GM10248 (cell line): ENCODE measurements at regions of chr3 and their contacts with region 1.

Region 1: GRCh38 chr3:56988458-56989168 is 71.9 kb upstream of the SPATA12 start:
- DNase-seq: peak; percentile 66
- CTCF ChIP-seq: peak; percentile 62

Region 2: GRCh38 chr3:56693750-56694149 is 294.9 kb before region 1 on chr3:
- CTCF ChIA-PET with region 1: interaction called, 16 read pairs
- POLR2A ChIA-PET with region 1: interaction called, 3 read pairs
- DNase-seq: no peak
- CTCF ChIP-seq: no peak

Region 3: GRCh38 chr3:56769116-56769707 is 219.4 kb before region 1 on chr3:
- CTCF ChIA-PET with region 1: interaction called, 11 read pairs
- POLR2A ChIA-PET with region 1: no interaction called
- DNase-seq: no peak
- CTCF ChIP-seq: no peak

Region 4: DNA sequence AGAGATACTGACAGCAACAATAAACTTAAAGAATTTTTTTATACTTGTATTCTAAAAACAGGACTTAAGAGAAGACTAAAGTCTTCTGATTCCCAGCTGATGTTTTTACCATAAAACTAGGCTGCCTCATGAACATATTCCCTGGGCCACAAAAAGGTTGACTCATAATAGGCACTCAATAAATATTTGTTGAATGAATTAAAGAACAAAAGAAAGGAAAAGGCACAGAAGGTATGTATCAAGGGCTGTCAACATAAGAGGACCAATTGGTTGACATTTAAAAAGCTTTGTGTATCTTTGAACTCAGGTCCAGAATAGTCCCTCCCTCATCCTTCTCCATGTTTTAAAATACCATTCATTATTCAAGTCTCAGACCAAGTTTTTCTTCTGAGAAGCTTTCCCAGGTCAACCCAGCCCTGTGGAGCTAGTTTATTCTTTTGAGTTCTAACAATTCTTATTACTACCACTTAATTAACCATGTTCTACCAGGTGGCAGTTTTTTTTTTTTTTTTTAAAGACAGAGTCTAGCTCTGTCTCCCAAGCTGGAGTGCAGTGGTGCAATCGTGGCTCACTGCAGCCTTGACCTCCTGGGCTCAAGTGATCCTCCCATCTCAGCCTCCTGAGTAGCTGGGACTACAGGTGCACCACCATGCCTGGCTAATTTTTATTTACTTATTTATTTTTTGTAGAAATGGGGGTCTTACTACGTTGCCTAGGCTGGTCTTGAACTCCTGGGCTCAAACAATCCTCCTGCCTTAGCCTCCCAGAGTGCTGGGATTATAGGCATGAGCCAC is 169.4 kb before region 1 on chr3:
- CTCF ChIA-PET with region 1: interaction called, 31 read pairs
- POLR2A ChIA-PET with region 1: no interaction called
- DNase-seq: no peak
- CTCF ChIP-seq: no peak

Region 5: GRCh38 chr3:56855856-56856512 is 132.6 kb before region 1 on chr3:
- CTCF ChIA-PET with region 1: interaction called, 12 read pairs
- POLR2A ChIA-PET with region 1: no interaction called
- DNase-seq: peak; percentile 37
- CTCF ChIP-seq: peak; percentile 79

Region 6: DNA sequence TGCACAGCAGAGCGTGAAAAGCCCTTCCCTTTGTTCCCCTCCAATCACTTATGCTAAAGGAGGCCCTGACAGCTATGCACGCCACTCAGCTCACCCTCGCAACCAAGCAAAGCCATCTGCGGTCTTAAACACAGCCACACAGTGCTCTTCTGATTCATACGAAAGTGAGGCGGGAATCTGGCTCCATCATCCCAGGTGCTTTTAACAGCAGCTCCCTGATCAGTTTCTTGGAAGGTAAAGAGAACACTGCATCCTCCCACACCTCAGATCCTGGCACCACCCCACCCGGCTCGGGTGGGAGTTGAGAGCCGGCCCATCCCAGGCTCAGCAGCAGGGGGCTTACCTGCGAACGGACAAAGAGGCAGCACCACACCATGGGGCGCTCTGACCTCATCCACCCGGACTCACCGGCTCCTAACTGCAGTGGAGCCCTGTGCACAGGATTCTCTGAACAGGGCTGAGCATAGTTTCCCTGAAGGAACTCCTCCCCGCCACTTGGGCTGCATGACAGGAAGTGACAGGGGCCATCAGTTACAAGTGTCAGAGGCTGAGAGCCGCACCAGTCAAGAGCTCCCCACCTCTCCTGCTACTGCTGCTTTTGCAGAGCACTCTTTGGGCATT is 72.5 kb before region 1 on chr3:
- CTCF ChIA-PET with region 1: no interaction called
- POLR2A ChIA-PET with region 1: no interaction called
- DNase-seq: peak; percentile 60
- CTCF ChIP-seq: no peak

Region 7: DNA sequence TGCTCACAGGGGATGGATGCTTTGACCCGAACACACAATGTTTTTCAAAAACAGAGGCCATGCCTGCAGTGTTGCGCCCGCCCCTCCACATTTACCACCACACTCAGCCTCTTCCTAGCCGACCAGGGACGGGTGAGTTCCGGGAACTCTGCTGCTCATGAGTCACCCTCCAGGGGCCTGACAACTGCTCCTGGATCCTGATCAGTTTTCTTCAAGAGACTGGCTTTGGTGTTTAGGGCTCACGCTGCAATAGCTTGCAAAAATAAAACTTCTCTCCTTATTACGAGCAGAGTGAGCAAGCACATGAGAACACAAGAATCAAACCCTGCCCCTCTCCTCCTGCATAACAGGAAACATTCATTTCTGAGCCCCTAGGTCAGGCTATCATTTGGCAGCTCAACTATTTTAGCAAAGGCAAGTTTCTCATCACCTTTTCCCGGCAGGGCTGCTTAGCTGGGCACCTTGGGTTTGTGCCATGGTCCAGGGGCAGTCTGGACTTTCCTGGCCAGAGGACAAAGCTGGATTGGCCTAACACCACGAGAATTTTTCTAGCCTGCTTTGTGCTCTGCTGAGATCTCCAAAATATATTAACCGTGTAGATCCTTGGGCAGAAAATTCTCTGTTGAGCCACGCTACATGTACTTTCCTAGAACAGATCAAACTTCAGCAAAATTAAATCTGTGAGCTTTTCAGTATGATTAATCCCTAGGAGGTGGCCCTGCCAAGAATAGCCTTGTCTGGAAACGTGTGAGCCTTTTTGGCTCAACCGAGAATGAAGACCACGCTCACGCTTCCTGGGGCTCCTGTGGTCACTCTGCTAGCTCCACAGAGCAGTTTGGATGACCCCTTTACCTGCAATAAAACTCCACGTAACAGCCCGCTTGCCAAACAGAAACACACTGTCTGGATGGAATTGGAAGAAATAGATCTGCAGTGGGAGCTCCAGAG is 19.2 kb after region 1 on chr3:
- CTCF ChIA-PET with region 1: interaction called, 33 read pairs
- POLR2A ChIA-PET with region 1: no interaction called
- DNase-seq: no peak
- CTCF ChIP-seq: no peak